Naive thymus-derived CD4-positive, alpha-beta T cell (primary cell): ENCODE measurements at regions of chr10 and their contacts with region 1.

Region 1: DNA sequence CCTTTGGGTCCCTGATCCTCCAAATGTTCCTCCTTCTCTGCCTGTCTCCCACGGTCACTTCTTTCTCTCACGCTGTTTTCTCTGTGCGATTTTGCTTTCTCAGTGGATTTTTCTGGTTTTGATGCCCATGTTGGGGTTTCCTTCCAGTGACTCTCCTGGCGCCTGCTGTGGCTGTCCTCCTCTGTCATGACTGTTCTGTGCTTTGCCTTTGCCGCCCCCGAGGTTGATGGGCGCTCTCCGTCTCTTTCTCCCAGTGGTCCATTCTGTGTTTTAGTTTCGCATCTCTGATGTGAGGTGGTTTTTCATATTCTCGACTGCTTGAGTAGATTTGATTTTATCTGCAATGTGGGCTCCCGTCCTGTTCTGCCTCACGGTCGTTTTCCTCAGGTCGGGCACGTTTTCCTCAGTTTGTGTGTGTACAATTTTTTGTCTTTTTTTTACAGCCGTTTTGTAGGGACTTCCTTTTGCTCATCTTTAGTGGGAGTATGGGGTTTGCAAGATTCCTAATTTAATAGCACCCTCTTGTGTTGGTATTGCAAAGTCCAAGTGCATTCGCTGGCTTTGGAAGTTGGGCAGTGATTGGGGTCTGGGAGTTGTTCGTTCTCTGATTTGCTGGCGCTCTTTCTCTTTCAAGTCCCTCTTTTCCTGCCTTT is 100.0 kb downstream of the INPP5A start:
- DNase-seq: peak in 6 of 9 donors; percentile 30 to 64 (median 56)
- ATAC-seq: peak; percentile 79
- H3K4me3 ChIP-seq: no peak overlapping the region
- H3K4me3 Mint-ChIP-seq: peak overlapping the region in 2 of 10 donors; percentile 11 to 46
- H3K27ac ChIP-seq: no peak overlapping the region
- H3K27ac Mint-ChIP-seq: peak overlapping the region in 3 of 9 donors; percentile 48 to 80 (median 76)
- H3K4me1 ChIP-seq: no peaks in the 10 kb centered on the region
- H3K4me1 Mint-ChIP-seq: peaks cover 24 to 62% (median 55%) of the 10 kb centered on the region in 7 donors
- H3K27me3 ChIP-seq: no peaks in the 10 kb centered on the region
- H3K27me3 Mint-ChIP-seq: peaks cover 0 to 6% (median 0%) of the 10 kb centered on the region in 5 donors

Region 2: DNA sequence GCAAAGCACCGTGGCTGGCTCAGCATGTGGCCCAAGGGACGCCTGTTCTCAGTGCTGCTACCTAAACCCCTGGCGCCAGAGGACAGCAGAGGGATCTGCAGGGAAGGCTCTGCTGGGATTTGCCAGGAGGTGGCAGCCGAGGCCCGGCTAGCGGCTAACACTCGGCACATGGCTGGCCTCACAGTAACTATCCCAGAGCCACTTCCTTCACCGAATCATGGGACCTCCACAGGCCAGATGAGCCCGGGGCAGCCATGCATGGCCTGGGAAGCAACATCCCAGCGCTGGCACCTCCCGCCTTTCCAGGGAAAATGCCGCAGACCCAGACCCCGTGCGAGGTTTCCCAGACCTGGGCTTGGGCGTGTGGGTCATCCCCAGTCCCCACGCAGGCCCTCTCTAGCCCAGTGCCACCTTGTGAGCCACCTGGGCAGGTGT is 414.4 kb before region 1 on chr10:
- CTCF ChIA-PET with region 1: no interaction called
- POLR2A ChIA-PET with region 1: no interaction called
- intact Hi-C with region 1: loop called (anchors 1 to 5 kb)
- DNase-seq: peak; percentile 40 to 73 (median 60)
- ATAC-seq: peak; percentile 96
- H3K4me3 ChIP-seq: no peak overlapping the region
- H3K4me3 Mint-ChIP-seq: no peak overlapping the region
- H3K27ac ChIP-seq: no peak overlapping the region
- H3K27ac Mint-ChIP-seq: no peak overlapping the region
- H3K4me1 ChIP-seq: peaks cover 0 to 6% of the 10 kb centered on the region in 2 donors
- H3K4me1 Mint-ChIP-seq: peaks cover 0 to 8% (median 5%) of the 10 kb centered on the region in 7 donors
- H3K27me3 ChIP-seq: no peaks in the 10 kb centered on the region
- H3K27me3 Mint-ChIP-seq: no peaks in the 10 kb centered on the region

Region 3: DNA sequence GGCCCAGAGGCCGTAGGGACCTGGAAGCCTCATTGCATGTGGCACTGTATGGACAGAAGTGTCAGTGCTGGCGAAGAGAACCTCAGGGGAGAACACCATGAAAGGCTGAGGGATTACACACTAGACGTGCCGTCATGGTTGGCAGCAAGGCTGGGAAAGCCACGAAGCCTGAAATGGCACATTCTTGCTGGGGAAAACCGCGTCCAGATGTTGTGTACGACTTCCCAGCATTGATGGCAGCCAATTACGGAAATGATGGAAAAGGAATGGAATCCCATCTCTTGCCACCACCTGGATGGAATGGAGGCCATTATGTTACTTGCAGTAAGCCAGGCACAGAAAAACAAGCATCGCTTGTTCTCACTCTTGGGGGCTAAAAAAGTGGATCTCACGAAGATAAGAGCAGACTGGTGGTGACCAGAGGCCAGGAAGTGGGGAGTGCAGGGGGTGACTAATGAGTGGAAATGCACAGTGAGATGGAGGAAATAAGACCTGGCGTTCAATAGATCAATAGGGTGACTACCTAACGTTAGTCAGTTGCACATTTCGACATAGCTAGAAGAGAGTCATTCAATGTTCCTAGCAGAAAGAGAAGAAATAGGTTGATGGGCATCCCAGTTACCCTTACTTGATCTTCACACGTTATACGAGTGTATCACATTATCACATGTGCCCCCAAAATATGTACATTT is 255.2 kb before region 1 on chr10:
- CTCF ChIA-PET with region 1: no interaction called
- POLR2A ChIA-PET with region 1: no interaction called
- intact Hi-C with region 1: loop called (anchors 2 to 5 kb)
- DNase-seq: no peak
- ATAC-seq: no peak
- H3K4me3 ChIP-seq: no peak overlapping the region
- H3K4me3 Mint-ChIP-seq: no peak overlapping the region
- H3K27ac ChIP-seq: no peak overlapping the region
- H3K27ac Mint-ChIP-seq: peak overlapping the region in 1 of 9 donors; percentile 40
- H3K4me1 ChIP-seq: peaks cover under 1% of the 10 kb centered on the region in 2 donors
- H3K4me1 Mint-ChIP-seq: peaks cover 4 to 20% (median 10%) of the 10 kb centered on the region in 7 donors
- H3K27me3 ChIP-seq: no peaks in the 10 kb centered on the region
- H3K27me3 Mint-ChIP-seq: peaks cover 0 to 4% (median 0%) of the 10 kb centered on the region in 5 donors

Region 4: DNA sequence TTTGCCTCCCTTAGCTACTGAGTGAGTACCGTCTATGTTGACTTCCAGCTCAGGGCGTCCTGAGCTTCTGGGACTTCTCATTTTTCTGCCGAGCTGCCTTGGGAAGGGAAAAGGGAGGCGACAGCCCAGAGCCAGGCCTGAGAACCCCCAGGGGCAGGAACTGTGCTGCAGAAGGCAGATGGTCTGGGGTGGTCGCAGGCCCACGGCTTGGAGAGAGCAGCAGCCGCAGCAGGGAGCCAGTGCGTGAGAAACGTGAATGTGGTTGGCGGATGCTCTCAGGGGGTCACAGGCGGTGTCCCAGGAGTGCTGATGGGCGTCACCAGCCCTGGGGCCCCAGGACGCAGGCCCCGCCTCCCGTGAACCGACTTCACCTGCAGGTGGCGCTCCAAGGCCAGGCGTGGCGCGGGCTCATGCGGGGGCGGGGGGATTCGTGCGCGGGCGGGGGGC is 249.8 kb before region 1 on chr10:
- CTCF ChIA-PET with region 1: no interaction called
- POLR2A ChIA-PET with region 1: no interaction called
- intact Hi-C with region 1: loop called (anchors 2 to 5 kb)
- DNase-seq: peak; percentile 63 to 87 (median 77)
- ATAC-seq: peak; percentile 94
- H3K4me3 ChIP-seq: peak overlapping the region; percentile 35
- H3K4me3 Mint-ChIP-seq: peak overlapping the region in 9 of 10 donors; percentile 29 to 76 (median 62)
- H3K27ac ChIP-seq: peak overlapping the region; percentile 2
- H3K27ac Mint-ChIP-seq: peak overlapping the region in 7 of 9 donors; percentile 43 to 82 (median 70)
- H3K4me1 ChIP-seq: peaks cover 5 to 6% of the 10 kb centered on the region in 2 donors
- H3K4me1 Mint-ChIP-seq: peaks cover 3 to 22% (median 11%) of the 10 kb centered on the region in 7 donors
- H3K27me3 ChIP-seq: no peaks in the 10 kb centered on the region
- H3K27me3 Mint-ChIP-seq: no peaks in the 10 kb centered on the region

Region 5: DNA sequence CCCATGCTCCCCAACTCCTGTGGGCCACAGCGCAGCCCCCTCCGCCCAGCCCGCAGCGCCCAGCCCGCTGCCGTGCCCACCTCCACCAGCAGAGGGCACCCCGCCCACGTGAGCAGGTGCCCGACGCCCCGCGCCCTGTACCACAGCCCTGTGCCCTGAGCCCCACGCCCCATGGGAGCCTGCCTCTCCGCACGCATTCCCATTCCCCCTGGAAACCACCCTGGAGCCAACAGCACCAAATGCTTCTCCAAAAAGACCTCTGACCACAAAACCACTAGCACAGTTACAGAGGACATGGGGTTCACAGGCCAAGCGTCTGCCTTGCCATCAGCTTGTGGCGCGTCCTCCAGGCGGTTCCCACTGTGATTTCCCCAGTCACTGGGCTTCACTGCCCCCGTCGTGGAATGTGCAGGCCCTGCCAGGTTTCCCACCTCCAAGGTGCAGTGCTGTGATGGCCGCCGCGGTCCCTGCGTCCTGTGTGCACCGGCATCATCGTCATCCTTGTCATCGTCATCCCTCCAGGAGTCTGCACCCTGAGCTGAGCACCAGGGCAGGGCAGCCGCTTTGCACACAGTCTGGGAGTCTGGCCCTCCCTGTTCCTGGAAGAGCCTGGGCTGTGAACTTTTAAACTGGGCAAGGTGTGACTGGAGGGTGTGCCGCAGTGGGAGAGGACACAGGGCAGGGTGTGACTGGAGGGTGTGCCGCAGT is 178.9 kb before region 1 on chr10:
- CTCF ChIA-PET with region 1: interaction called, 18 read pairs
- POLR2A ChIA-PET with region 1: no interaction called
- intact Hi-C with region 1: loop called in 1 of 2 experiments (anchors 1 kb)
- DNase-seq: peak; percentile 41 to 85 (median 67)
- ATAC-seq: peak; percentile 89
- H3K4me3 ChIP-seq: no peak overlapping the region
- H3K4me3 Mint-ChIP-seq: peak overlapping the region in 2 of 10 donors; percentile 10 to 30
- H3K27ac ChIP-seq: no peak overlapping the region
- H3K27ac Mint-ChIP-seq: peak overlapping the region in 1 of 9 donors; percentile 60
- H3K4me1 ChIP-seq: no peaks in the 10 kb centered on the region
- H3K4me1 Mint-ChIP-seq: peaks cover 0 to 6% (median 0%) of the 10 kb centered on the region in 7 donors
- H3K27me3 ChIP-seq: no peaks in the 10 kb centered on the region
- H3K27me3 Mint-ChIP-seq: no peaks in the 10 kb centered on the region